Transverse colon (tissue), 4 donors: ENCODE measurements at regions of chr15 and their contacts with region 1.

Region 1: DNA sequence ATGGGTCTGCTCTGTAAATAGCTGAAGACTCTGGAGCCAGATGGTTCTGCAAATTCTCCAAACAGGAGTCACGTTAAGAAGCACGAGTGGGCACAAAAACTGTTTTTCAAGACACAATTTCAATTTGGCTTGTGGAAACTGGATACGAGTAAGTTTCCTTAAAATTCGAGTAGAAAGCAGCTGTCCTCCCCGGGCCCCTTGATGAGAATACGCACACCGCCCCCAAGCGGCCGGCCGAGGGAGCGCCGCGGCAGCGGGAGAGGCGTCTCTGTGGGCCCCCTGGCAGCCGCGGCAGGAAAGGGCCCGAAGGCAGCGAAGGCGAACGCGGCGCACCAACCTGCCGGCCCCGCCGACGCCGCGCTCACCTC is 778 bp upstream of the THBS1 start:
- DNase-seq: peak; percentile 95
- H3K4me3 ChIP-seq: peak overlapping the region; percentile 55 to 83 (median 57)
- H3K27ac ChIP-seq: peak overlapping the region; percentile 86 to 97 (median 95)
- H3K4me1 ChIP-seq: peaks cover under 1 to 51% (median 36%) of the 10 kb centered on the region in 4 donors
- H3K27me3 ChIP-seq: no peaks in the 10 kb centered on the region
- CTCF ChIP-seq: peak; percentile 95 to 100 (median 98)
- EP300 ChIP-seq: no peak
- POLR2A ChIP-seq: no peak

Region 2: DNA sequence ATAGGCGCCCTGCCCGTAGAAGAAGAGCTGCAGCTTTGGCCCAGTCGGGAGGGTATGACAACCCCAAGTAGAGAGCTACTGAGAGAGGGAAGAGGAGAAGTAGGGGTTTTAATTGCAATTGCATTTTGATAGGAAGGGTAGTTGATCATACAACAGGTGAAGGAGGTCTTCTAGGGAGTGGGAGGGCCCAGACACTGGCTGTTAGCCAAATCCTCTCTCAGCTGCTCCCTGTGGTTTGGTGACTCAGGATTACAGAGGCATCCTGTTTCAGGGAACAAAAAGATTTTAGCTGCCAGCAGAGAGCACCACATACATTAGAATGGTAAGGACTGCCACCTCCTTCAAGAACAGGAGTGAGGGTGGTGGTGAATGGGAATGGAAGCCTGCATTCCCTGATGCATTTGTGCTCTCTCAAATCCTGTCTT is 408.1 kb before region 1 on chr15:
- in situ Hi-C with region 1: loop called in 2 of 4 experiments (anchors 10 kb)
- intact Hi-C with region 1: loop called (anchors 1 kb)
- DNase-seq: peak; percentile 41
- H3K4me3 ChIP-seq: no peak overlapping the region
- H3K27ac ChIP-seq: peak overlapping the region; percentile 66 to 79 (median 70)
- H3K4me1 ChIP-seq: peaks cover 2 to 15% (median 9%) of the 10 kb centered on the region in 4 donors
- H3K27me3 ChIP-seq: no peaks in the 10 kb centered on the region
- CTCF ChIP-seq: peak in 4 of 5 experiments; percentile 12 to 55 (median 32)
- EP300 ChIP-seq: no peak
- POLR2A ChIP-seq: no peak

Region 3: DNA sequence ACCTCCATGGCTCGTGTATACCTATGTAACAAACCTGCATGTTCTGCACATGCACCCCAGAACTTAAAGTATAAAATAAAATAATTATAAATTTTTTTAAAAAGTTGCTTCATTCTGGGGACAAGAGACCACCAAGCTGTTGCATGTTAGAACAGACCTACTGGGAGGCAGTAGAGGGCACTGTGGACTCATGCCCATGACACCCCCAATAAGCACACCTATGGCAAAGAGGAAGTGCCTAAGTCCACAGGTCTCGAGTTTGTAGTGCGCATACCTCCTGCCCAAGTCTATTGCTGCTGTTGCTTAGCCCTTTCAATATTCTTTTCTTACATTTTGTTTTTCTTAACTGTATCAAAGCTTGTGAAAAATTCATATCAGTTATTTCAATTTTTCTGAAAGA is 267.1 kb before region 1 on chr15:
- in situ Hi-C with region 1: loop called in 3 of 4 experiments (anchors 10 kb)
- intact Hi-C with region 1: no loop called
- DNase-seq: peak; percentile 63
- H3K4me3 ChIP-seq: no peak overlapping the region
- H3K27ac ChIP-seq: peak overlapping the region in 2 of 4 donors; percentile 70 to 77
- H3K4me1 ChIP-seq: peaks cover 0 to 36% (median 2%) of the 10 kb centered on the region in 4 donors
- H3K27me3 ChIP-seq: no peaks in the 10 kb centered on the region
- CTCF ChIP-seq: peak; percentile 24 to 68 (median 47)
- EP300 ChIP-seq: peak; percentile 30
- POLR2A ChIP-seq: no peak

Region 4: DNA sequence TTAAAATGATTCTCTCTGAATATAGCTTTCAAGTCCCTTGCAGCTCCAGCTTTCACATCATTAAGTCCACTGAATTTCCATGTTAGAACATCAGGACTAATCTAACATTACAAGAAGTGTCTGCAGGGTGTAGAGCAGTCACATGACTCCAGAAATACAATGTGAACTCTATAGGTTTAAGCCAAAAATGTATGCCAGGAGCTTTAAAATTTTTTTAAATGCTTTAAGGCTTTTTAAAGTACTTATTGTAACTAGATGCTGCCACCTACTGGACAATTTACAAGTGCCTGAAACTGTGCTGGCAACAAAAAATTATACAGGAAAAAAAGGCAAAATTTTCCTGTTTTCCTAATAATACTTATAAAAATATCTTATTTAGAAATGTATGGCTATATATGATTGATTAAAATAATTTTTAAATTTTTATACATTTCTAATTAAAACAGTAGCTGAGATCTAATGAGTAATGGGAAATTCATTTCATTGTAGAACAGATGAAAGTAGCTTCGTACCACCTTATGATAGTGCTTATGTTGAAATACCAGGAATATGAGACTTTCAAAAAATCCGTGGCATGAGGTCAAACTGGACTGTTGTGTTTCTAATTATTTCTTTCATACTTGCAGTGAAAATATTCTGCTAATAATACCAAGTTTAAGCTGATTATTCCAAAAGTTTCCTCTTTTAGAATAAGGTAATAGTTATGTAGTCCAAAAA is 176.9 kb after region 1 on chr15:
- in situ Hi-C with region 1: loop called in 3 of 4 experiments (anchors 10 to 25 kb)
- intact Hi-C with region 1: no loop called
- DNase-seq: no peak
- H3K4me3 ChIP-seq: no peak overlapping the region
- H3K27ac ChIP-seq: no peak overlapping the region
- H3K4me1 ChIP-seq: peaks cover 0 to 6% (median 2%) of the 10 kb centered on the region in 4 donors
- H3K27me3 ChIP-seq: no peaks in the 10 kb centered on the region
- CTCF ChIP-seq: peak; percentile 71 to 93 (median 85)
- EP300 ChIP-seq: no peak
- POLR2A ChIP-seq: no peak